ENCODE measurements at regions of chr2 and their contacts with region 1.

Region 1: DNA sequence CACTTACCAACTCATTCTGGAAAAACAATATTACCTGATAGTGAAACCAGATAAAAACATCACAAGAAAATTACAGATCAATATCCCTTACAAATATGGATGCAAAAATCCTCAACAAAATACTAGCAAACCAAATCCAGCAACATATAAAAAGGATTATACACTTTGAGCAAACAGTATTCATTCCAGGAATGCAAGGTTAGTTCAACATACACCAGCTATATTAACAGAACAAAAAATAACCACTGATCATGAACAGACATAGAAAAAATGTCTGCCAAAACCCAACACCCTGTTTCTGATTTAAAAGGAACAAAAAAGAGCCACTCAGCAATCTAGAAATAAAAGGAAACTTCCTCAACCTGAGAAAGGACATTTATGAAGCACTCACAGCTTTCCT is 62.1 kb downstream of the TLK1 start:
- DNase-seq: no peak
- ATAC-seq: no peak
- H3K4me3 Mint-ChIP-seq: no peak overlapping the region
- H3K27ac Mint-ChIP-seq: no peak overlapping the region
- H3K4me1 Mint-ChIP-seq: peaks cover 20 to 51% (median 46%) of the 10 kb centered on the region in 4 donors
- H3K27me3 Mint-ChIP-seq: no peaks in the 10 kb centered on the region

Region 2: DNA sequence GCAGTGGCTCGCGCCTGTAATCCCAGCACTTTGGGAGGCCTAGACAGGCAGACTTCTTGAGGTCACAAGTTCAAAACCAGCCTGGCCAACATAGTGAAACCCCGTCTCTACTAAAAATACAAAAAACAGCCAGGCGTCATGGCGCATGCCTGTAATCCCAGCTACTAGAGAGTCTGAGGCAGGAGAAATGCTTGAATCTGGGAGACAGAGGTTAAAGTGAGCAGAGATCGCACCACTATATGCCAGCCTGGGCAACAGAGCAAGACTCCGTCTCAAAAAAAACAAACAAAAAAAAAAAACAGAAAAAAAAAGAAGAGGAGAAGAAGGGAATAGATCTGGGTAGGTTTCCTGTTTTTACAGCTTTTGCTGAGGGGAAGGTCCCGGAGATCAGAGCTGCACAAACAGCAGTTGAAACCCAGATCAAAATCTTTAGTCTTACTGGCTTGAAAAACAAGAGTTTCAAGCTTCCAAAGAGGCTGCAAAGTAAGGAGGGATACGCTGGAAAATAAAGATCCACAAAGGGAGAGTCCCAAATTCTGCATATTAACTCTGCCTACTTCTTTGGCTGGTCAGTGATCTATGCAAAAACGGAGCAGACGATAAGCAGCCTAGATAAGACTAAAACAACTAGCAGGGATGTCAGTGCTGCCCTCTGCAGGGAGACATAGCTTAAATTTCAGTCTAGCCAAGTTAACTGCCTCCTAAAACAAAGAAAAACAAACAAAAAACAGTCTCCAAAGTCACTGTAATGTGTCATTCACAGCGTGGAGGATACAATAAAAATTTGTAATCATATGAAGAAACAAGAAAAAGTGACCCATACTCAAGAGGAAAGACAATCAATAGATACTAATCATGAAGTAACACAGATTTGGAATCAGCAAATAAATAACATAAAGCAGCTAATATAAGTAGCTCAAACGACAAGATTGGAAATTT is 12.0 kb before region 1 on chr2:
- POLR2A ChIA-PET with region 1: interaction called, 13 read pairs
- DNase-seq: peak; percentile 17 to 69 (median 52)
- ATAC-seq: peak; percentile 70 to 80
- H3K4me3 Mint-ChIP-seq: peak overlapping the region; percentile 83 to 97 (median 86)
- H3K27ac Mint-ChIP-seq: peak overlapping the region; percentile 87 to 98 (median 94)
- H3K4me1 Mint-ChIP-seq: peaks cover 30 to 69% (median 65%) of the 10 kb centered on the region in 4 donors
- H3K27me3 Mint-ChIP-seq: no peaks in the 10 kb centered on the region

Region 3: GRCh38 chr2:171109571-171109970 is 11.0 kb after region 1 on chr2:
- POLR2A ChIA-PET with region 1: no interaction called
- DNase-seq: no peak
- ATAC-seq: no peak
- H3K4me3 Mint-ChIP-seq: no peak overlapping the region
- H3K27ac Mint-ChIP-seq: peak overlapping the region in 7 of 10 donors; percentile 4 to 66 (median 48)
- H3K4me1 Mint-ChIP-seq: peaks cover 31 to 52% (median 47%) of the 10 kb centered on the region in 4 donors
- H3K27me3 Mint-ChIP-seq: no peaks in the 10 kb centered on the region